WTC11 (cell line): ENCODE measurements at regions of chr14 and their contacts with region 1.

Region 1: GRCh38 chr14:74257078-74257989 is 18.1 kb downstream of the VSX2 start:
- DNase-seq: peak; percentile 68
- ATAC-seq: peak; percentile 69
- H3K4me3 Mint-ChIP-seq: peak overlapping the region; percentile 80
- H3K27ac Mint-ChIP-seq: no peak overlapping the region
- H3K4me1 Mint-ChIP-seq: no peaks in the 10 kb centered on the region
- H3K27me3 Mint-ChIP-seq: peaks cover 55% of the 10 kb centered on the region
- CTCF ChIP-seq: peak; percentile 97

Region 2: DNA sequence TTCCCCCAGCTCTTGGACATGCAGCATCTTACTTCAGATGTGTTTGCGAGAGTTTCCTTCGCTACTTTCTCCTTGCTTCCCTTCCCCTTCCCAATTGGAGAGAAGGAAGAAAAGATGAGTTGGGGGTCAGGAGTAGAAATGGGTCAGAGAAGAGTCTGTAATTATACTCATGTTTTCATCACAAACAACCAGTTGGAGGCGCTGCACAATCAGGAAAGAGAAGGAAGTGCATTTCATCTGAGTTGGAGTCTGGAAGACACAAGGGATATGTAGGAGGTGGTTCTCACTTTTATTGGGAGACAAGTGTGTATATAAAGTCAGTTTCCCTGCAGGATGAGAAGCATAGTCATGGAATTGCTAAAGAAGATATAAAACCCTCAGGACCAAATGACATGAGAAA is 49.4 kb before region 1 on chr14:
- CTCF ChIA-PET with region 1: interaction called, 31 read pairs
- POLR2A ChIA-PET with region 1: no interaction called
- DNase-seq: peak; percentile 54
- ATAC-seq: peak; percentile 78
- H3K4me3 Mint-ChIP-seq: no peak overlapping the region
- H3K27ac Mint-ChIP-seq: no peak overlapping the region
- H3K4me1 Mint-ChIP-seq: no peaks in the 10 kb centered on the region
- H3K27me3 Mint-ChIP-seq: no peaks in the 10 kb centered on the region
- CTCF ChIP-seq: no peak

Region 3: GRCh38 chr14:74223771-74224170 is 33.6 kb before region 1 on chr14:
- CTCF ChIA-PET with region 1: interaction called, 21 read pairs
- POLR2A ChIA-PET with region 1: no interaction called
- DNase-seq: no peak
- ATAC-seq: no peak
- H3K4me3 Mint-ChIP-seq: no peak overlapping the region
- H3K27ac Mint-ChIP-seq: no peak overlapping the region
- H3K4me1 Mint-ChIP-seq: no peaks in the 10 kb centered on the region
- H3K27me3 Mint-ChIP-seq: peaks cover 10% of the 10 kb centered on the region
- CTCF ChIP-seq: no peak

Region 4: DNA sequence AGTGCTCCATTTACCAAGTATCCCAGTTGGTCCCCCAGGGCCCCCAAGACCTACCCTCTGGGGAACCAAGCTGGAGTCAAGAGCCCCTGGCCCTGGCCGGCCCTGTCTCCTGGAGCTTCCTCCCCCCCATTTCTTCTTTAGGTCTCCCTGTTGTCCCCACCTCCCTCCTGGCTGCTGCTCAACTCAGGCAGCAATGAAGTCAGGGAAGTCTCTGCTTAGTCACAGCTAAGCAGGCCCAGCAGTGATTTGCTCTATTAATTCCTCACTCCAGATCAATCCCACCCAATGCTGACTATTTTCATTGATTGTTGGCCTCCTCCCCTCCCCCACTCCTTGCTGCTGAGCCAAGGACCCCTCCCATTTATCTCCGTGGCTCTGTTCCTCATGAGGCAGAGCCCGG is 10.3 kb after region 1 on chr14:
- CTCF ChIA-PET with region 1: interaction called, 24 read pairs
- POLR2A ChIA-PET with region 1: no interaction called
- DNase-seq: no peak
- ATAC-seq: peak; percentile 35; the same call in 1 of the 2 replicates
- H3K4me3 Mint-ChIP-seq: no peak overlapping the region
- H3K27ac Mint-ChIP-seq: 0 out of 2 replicates have a peak overlapping the region, but pooled peaks have one; percentile 29
- H3K4me1 Mint-ChIP-seq: peaks cover 15% of the 10 kb centered on the region
- H3K27me3 Mint-ChIP-seq: no peaks in the 10 kb centered on the region; the same call in 1 of the 2 replicates
- CTCF ChIP-seq: no peak

Region 5: GRCh38 chr14:74349757-74350156 is 92.4 kb after region 1 on chr14:
- CTCF ChIA-PET with region 1: interaction called, 11 read pairs
- POLR2A ChIA-PET with region 1: no interaction called
- DNase-seq: no peak
- ATAC-seq: no peak
- H3K4me3 Mint-ChIP-seq: peak overlapping the region; percentile 93
- H3K27ac Mint-ChIP-seq: peak overlapping the region; percentile 85
- H3K4me1 Mint-ChIP-seq: peaks cover 50% of the 10 kb centered on the region
- H3K27me3 Mint-ChIP-seq: no peaks in the 10 kb centered on the region
- CTCF ChIP-seq: no peak